IMR-90 (cell line): ENCODE measurements at regions of chr11 and their contacts with region 1.

Region 1: DNA sequence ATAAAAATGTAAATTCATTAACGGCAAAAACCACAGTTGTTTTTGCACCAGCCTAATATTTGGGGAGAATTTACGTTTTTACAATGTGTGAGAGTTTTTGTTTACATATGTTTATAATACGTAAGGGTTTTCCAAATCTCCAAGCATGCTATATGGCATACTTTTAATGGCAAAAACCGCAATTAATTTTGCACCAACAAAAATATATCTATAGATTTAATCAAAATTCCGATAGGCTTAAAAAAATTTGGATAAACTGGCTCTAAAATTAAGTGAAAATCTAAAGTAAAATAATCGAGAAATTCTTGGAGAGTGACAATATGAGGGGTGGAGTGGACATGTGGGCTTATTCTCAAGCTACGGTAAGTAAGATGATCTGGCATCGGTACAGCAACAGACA is 22.8 kb downstream of the KRTAP5-6 start:
- DNase-seq: no peak
- ATAC-seq: no peak
- H3K4me3 ChIP-seq: no peak overlapping the region
- H3K27ac ChIP-seq: no peak overlapping the region
- H3K4me1 ChIP-seq: no peaks in the 10 kb centered on the region
- H3K27me3 ChIP-seq: peaks cover 24% of the 10 kb centered on the region
- CTCF ChIP-seq: no peak
- POLR2A ChIP-seq: no peak
- RAD21 ChIP-seq: no peak

Region 2: DNA sequence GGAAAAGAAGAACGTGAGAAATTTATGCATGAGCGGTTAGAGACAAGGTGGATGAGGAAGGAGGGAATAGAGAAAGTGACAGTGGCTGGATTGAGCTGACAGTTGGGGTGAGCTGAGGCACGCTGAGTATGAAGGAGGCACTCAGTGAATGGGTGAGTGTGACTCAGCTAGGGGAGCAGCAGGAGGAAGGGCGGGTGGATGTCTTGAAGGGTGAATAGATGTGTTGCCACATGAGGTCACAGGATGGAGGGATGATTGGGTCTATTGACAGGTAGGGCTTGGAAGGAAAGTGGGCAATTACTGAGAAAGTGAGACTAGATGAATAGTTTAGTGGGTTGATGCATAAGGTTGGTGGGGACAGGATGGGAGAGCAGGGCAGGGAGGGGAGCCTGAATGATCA is 22.6 kb after region 1 on chr11:
- CTCF ChIA-PET with region 1: no interaction called
- POLR2A ChIA-PET with region 1: no interaction called
- dilution Hi-C with region 1: no loop called
- in situ Hi-C with region 1: no loop called
- intact Hi-C with region 1: no loop called
- DNase-seq: no peak
- ATAC-seq: no peak
- H3K4me3 ChIP-seq: no peak overlapping the region
- H3K27ac ChIP-seq: no peak overlapping the region
- H3K4me1 ChIP-seq: no peaks in the 10 kb centered on the region
- H3K27me3 ChIP-seq: peaks cover 24% of the 10 kb centered on the region
- CTCF ChIP-seq: no peak
- POLR2A ChIP-seq: no peak
- RAD21 ChIP-seq: no peak

Region 3: DNA sequence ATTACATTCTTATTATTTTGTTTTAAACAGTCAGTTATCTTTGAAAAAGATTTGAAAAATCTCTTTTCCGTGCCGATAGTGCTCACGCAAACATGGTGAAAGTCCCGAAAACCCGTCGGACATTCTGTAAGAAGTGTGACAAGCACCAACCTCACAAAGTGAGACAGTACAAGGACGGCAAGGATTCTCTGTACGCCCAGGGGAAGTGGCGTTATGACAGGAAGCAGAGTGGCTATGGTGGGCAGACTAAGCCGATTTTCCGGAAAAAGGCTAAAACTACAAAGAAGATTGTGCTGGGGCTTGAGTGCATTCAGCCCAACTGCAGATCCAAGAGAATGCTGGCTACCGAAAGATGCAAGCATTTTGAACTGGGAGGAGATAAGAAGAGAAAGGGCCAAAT is 72.7 kb after region 1 on chr11:
- CTCF ChIA-PET with region 1: no interaction called
- POLR2A ChIA-PET with region 1: no interaction called
- dilution Hi-C with region 1: no loop called
- in situ Hi-C with region 1: no loop called
- intact Hi-C with region 1: loop called (anchors 5 kb)
- DNase-seq: no peak
- ATAC-seq: no peak
- H3K4me3 ChIP-seq: no peak overlapping the region
- H3K27ac ChIP-seq: no peak overlapping the region
- H3K4me1 ChIP-seq: no peaks in the 10 kb centered on the region
- H3K27me3 ChIP-seq: peaks cover 44% of the 10 kb centered on the region
- CTCF ChIP-seq: no peak
- POLR2A ChIP-seq: no peak
- RAD21 ChIP-seq: no peak